CD8-positive, alpha-beta T cell (primary cell): ENCODE measurements at regions of chr19 and their contacts with region 1.

Region 1: DNA sequence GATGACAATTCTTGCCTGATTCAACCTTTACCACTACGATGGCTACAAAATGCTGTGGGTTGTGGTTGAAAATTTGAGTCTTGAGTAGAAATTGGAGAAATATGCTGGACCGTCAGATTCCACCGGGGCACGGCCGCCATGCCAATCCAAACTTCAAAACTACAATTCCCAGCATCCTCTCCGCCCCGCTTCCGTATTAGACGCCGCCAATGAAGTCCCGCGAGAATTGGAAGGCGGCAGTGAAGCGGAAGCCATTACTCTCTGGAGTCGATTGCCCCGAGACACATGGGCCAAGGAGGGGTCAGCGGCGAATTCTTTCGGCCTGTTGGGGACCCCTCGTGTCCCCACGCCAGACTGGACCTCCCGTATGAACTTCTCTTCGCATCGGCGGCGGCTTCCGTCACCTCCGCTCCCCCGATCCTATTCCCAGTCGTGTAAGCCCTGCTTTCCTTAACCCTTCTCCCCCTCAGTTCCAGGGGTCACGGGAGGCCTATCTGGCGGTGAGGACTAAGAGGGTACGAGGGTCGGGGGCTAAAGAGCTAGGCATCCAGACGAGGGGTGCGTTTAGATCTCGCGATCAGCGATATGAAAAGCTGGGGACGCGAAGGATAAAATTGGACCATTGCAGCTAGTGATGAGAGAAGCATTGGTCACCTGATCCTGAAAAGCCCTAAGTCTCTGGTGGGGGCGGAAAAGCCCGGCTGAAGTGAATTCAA is at the start of gene ZNF317:
- DNase-seq: peak; percentile 80 to 96 (median 90)
- ATAC-seq: peak; percentile 88
- H3K4me3 ChIP-seq: peak within 1 kb of the TSS; percentile 82 to 93
- H3K4me3 Mint-ChIP-seq: peak within 1 kb of the TSS; percentile 95
- H3K27ac ChIP-seq: peak within 1 kb of the TSS; percentile 86 to 88
- H3K27ac Mint-ChIP-seq: peak within 1 kb of the TSS; percentile 98
- H3K4me1 ChIP-seq: peaks cover 24% of the 10 kb centered on the region
- H3K4me1 Mint-ChIP-seq: peaks cover 46% of the 10 kb centered on the region
- H3K27me3 ChIP-seq: peaks cover 0 to 3% of the 10 kb centered on the region in 2 experiments
- H3K27me3 Mint-ChIP-seq: peaks cover 1% of the 10 kb centered on the region
- CTCF ChIP-seq: no peak
- total RNA-seq, gene ZNF317: 127 to 130 TPM

Region 2: DNA sequence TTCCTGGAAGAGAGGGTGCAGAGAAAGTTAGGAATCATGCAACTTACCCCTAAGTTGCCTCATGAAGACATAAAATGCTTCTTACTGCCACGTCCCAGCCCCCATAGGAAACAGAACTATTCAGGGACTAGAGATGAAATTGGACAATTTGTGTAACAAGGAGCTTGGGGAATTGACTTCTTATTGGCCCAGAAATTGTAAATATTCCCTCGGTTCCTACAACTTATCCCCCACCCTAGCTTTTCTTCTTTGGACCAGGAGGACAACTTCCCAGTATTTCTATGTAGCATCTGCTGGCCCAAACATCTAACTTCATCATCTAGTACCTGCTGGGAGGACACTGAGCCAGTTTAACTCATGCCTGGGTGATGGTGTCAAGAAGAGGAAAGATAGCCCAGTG is 53.6 kb before region 1 on chr19 and contains the start of gene OR1M1:
- CTCF ChIA-PET with region 1: no interaction called
- POLR2A ChIA-PET with region 1: no interaction called
- intact Hi-C with region 1: no loop called
- DNase-seq: no peak
- ATAC-seq: no peak
- H3K4me3 ChIP-seq: no peak within 1 kb of the TSS
- H3K4me3 Mint-ChIP-seq: no peak within 1 kb of the TSS
- H3K27ac ChIP-seq: no peak within 1 kb of the TSS
- H3K27ac Mint-ChIP-seq: no peak within 1 kb of the TSS
- H3K4me1 ChIP-seq: no peaks in the 10 kb centered on the region
- H3K4me1 Mint-ChIP-seq: no peaks in the 10 kb centered on the region
- H3K27me3 ChIP-seq: no peaks in the 10 kb centered on the region
- H3K27me3 Mint-ChIP-seq: peaks cover 25% of the 10 kb centered on the region
- CTCF ChIP-seq: no peak
- total RNA-seq, gene OR1M1: not detected

Region 3: GRCh38 chr19:9151367-9151766 is 11.1 kb after region 1 on chr19:
- CTCF ChIA-PET with region 1: no interaction called
- POLR2A ChIA-PET with region 1: no interaction called
- intact Hi-C with region 1: no loop called
- DNase-seq: peak in 3 of 9 experiments; percentile 7 to 49 (median 49)
- ATAC-seq: peak; percentile 58
- H3K4me3 ChIP-seq: no peak overlapping the region
- H3K4me3 Mint-ChIP-seq: no peak overlapping the region
- H3K27ac ChIP-seq: no peak overlapping the region
- H3K27ac Mint-ChIP-seq: no peak overlapping the region
- H3K4me1 ChIP-seq: peaks cover 29% of the 10 kb centered on the region
- H3K4me1 Mint-ChIP-seq: peaks cover 82% of the 10 kb centered on the region
- H3K27me3 ChIP-seq: no peaks in the 10 kb centered on the region
- H3K27me3 Mint-ChIP-seq: no peaks in the 10 kb centered on the region
- CTCF ChIP-seq: no peak

Region 4: GRCh38 chr19:9165256-9165655 is 24.9 kb after region 1 on chr19:
- CTCF ChIA-PET with region 1: no interaction called
- POLR2A ChIA-PET with region 1: no interaction called
- intact Hi-C with region 1: no loop called
- DNase-seq: no peak
- ATAC-seq: no peak
- H3K4me3 ChIP-seq: no peak overlapping the region
- H3K4me3 Mint-ChIP-seq: no peak overlapping the region
- H3K27ac ChIP-seq: no peak overlapping the region
- H3K27ac Mint-ChIP-seq: no peak overlapping the region
- H3K4me1 ChIP-seq: no peaks in the 10 kb centered on the region
- H3K4me1 Mint-ChIP-seq: no peaks in the 10 kb centered on the region
- H3K27me3 ChIP-seq: no peaks in the 10 kb centered on the region
- H3K27me3 Mint-ChIP-seq: no peaks in the 10 kb centered on the region
- CTCF ChIP-seq: no peak

Region 5: GRCh38 chr19:9205501-9206113 is 65.3 kb after region 1 on chr19:
- CTCF ChIA-PET with region 1: interaction called, 8 read pairs
- POLR2A ChIA-PET with region 1: no interaction called
- intact Hi-C with region 1: loop called (anchors 1 kb)
- DNase-seq: peak; percentile 32 to 79 (median 65)
- ATAC-seq: peak; percentile 71
- H3K4me3 ChIP-seq: peak overlapping the region in 1 of 2 experiments; percentile 32
- H3K4me3 Mint-ChIP-seq: peak overlapping the region; percentile 60
- H3K27ac ChIP-seq: no peak overlapping the region
- H3K27ac Mint-ChIP-seq: no peak overlapping the region
- H3K4me1 ChIP-seq: no peaks in the 10 kb centered on the region
- H3K4me1 Mint-ChIP-seq: peaks cover 6% of the 10 kb centered on the region
- H3K27me3 ChIP-seq: no peaks in the 10 kb centered on the region
- H3K27me3 Mint-ChIP-seq: peaks cover 8% of the 10 kb centered on the region
- CTCF ChIP-seq: peak; percentile 98

Region 6: GRCh38 chr19:9435279-9436268 is 295.3 kb after region 1 on chr19 and contains the start of gene ZNF266:
- CTCF ChIA-PET with region 1: no interaction called
- POLR2A ChIA-PET with region 1: no interaction called
- intact Hi-C with region 1: loop called (anchors 1 kb)
- DNase-seq: peak; percentile 87 to 97 (median 93)
- ATAC-seq: peak; percentile 87
- H3K4me3 ChIP-seq: peak within 1 kb of the TSS; percentile 80 to 95
- H3K4me3 Mint-ChIP-seq: peak within 1 kb of the TSS; percentile 93
- H3K27ac ChIP-seq: peak within 1 kb of the TSS; percentile 81 to 98
- H3K27ac Mint-ChIP-seq: peak within 1 kb of the TSS; percentile 98
- H3K4me1 ChIP-seq: peaks cover 31% of the 10 kb centered on the region
- H3K4me1 Mint-ChIP-seq: peaks cover 56% of the 10 kb centered on the region
- H3K27me3 ChIP-seq: no peaks in the 10 kb centered on the region
- H3K27me3 Mint-ChIP-seq: no peaks in the 10 kb centered on the region
- CTCF ChIP-seq: peak; percentile 67
- total RNA-seq, gene ZNF266: 62.2 to 65.3 TPM

Region 7: DNA sequence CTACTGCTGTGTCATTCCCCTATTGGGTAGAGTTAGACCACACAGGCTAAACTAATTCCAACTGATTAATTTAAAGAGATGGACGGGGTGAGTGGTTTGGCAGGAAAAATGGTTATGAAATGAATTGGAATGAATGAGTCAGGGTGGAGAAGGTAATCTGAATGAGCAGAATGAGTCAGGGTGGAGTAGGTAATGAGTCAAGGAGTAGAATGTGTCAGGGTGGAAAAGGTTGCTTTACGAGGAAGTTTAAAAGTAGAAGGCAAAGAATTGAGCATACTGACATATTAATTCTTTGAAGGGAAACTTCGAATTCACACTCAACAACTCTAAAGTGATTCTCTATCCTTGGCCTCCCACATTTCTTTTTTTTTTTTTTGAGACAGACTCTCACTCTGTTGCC is 456.7 kb after region 1 on chr19:
- CTCF ChIA-PET with region 1: no interaction called
- POLR2A ChIA-PET with region 1: no interaction called
- intact Hi-C with region 1: no loop called
- DNase-seq: no peak
- ATAC-seq: no peak
- H3K4me3 ChIP-seq: no peak overlapping the region
- H3K4me3 Mint-ChIP-seq: no peak overlapping the region
- H3K27ac ChIP-seq: no peak overlapping the region
- H3K27ac Mint-ChIP-seq: no peak overlapping the region
- H3K4me1 ChIP-seq: no peaks in the 10 kb centered on the region
- H3K4me1 Mint-ChIP-seq: no peaks in the 10 kb centered on the region
- H3K27me3 ChIP-seq: no peaks in the 10 kb centered on the region
- H3K27me3 Mint-ChIP-seq: peaks cover 7% of the 10 kb centered on the region
- CTCF ChIP-seq: no peak

Region 8: DNA sequence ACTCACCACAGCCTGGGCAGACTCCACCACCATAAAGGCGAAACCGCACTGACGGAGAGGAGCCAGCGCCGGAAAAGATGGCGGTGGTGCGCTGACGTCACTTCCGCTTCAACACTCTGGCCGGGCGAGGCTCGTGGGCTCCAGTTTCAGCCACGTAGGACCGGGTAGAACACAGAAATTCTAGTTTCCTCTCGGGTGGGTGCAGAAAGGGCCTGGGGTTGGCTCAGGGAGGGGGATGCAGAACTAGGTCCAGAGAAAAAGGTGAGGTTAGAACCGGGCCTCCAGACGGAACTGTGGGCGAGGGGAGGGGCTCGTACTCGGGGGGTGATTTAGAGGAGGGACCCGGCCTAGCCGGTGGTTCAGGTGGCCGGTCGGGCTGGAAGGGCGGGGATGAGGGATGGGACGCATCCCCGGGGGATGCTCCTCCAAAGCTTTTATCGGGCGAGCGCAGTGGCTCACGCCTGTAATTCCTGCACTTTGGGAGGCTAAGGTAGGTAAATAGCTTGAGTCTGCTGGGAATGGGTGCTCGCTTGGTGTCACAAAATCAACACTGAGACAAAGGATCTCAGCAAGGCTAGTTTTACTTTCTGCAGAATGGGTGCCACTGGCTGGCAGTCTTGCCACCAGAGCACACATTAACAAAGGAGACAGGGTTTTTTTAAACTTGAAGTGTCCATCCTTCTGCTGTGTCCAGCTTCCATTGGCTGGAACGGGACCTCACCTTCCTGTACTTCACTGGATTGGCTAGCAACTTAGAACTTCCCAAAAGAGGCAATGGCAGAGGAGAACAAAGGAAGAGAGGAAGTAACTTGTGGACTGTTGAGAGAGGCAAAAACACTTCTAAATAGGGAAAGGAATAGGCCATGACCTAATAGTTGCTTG is 481.1 kb after region 1 on chr19 and contains the start of gene ZNF561:
- CTCF ChIA-PET with region 1: no interaction called
- POLR2A ChIA-PET with region 1: no interaction called
- intact Hi-C with region 1: loop called (anchors 1 kb)
- DNase-seq: peak; percentile 77 to 97 (median 91)
- ATAC-seq: peak; percentile 85
- H3K4me3 ChIP-seq: peak within 1 kb of the TSS; percentile 81 to 97
- H3K4me3 Mint-ChIP-seq: peak within 1 kb of the TSS; percentile 95
- H3K27ac ChIP-seq: peak within 1 kb of the TSS; percentile 91 to 94
- H3K27ac Mint-ChIP-seq: peak within 1 kb of the TSS; percentile 99
- H3K4me1 ChIP-seq: peaks cover 15% of the 10 kb centered on the region
- H3K4me1 Mint-ChIP-seq: peaks cover 27% of the 10 kb centered on the region
- H3K27me3 ChIP-seq: no peaks in the 10 kb centered on the region
- H3K27me3 Mint-ChIP-seq: no peaks in the 10 kb centered on the region
- CTCF ChIP-seq: no peak
- total RNA-seq, gene ZNF561: 35.5 to 39.8 TPM

Region 9: GRCh38 chr19:9796113-9796773 is 655.9 kb after region 1 on chr19:
- CTCF ChIA-PET with region 1: no interaction called
- POLR2A ChIA-PET with region 1: no interaction called
- intact Hi-C with region 1: loop called in 1 of 2 experiments (anchors 2 kb)
- DNase-seq: peak; percentile 66 to 95 (median 87)
- ATAC-seq: peak; percentile 23
- H3K4me3 ChIP-seq: no peak overlapping the region
- H3K4me3 Mint-ChIP-seq: no peak overlapping the region
- H3K27ac ChIP-seq: peak overlapping the region; percentile 64 to 80
- H3K27ac Mint-ChIP-seq: peak overlapping the region; percentile 64
- H3K4me1 ChIP-seq: peaks cover 22% of the 10 kb centered on the region
- H3K4me1 Mint-ChIP-seq: peaks cover 27% of the 10 kb centered on the region
- H3K27me3 ChIP-seq: no peaks in the 10 kb centered on the region
- H3K27me3 Mint-ChIP-seq: no peaks in the 10 kb centered on the region
- CTCF ChIP-seq: peak; percentile 67

Region 10: GRCh38 chr19:9934132-9934950 is 794.0 kb after region 1 on chr19:
- CTCF ChIA-PET with region 1: no interaction called
- POLR2A ChIA-PET with region 1: no interaction called
- intact Hi-C with region 1: loop called in 1 of 2 experiments (anchors 5 kb)
- DNase-seq: peak; percentile 63 to 90 (median 80)
- ATAC-seq: peak; percentile 92
- H3K4me3 ChIP-seq: no peak overlapping the region
- H3K4me3 Mint-ChIP-seq: no peak overlapping the region
- H3K27ac ChIP-seq: no peak overlapping the region
- H3K27ac Mint-ChIP-seq: no peak overlapping the region
- H3K4me1 ChIP-seq: peaks cover 21% of the 10 kb centered on the region
- H3K4me1 Mint-ChIP-seq: peaks cover 30% of the 10 kb centered on the region
- H3K27me3 ChIP-seq: peaks cover 6 to 38% of the 10 kb centered on the region in 2 experiments
- H3K27me3 Mint-ChIP-seq: peaks cover 51% of the 10 kb centered on the region
- CTCF ChIP-seq: peak; percentile 89